Body of pancreas (tissue), 4 donors: ENCODE measurements at regions of chr5 and their contacts with region 1.

Region 1: GRCh38 chr5:93596676-93597461 is 13.8 kb downstream of the NR2F1 start:
- DNase-seq: no peak
- ATAC-seq: no peak
- H3K4me3 ChIP-seq: no peak overlapping the region
- H3K27ac ChIP-seq: no peak overlapping the region
- H3K4me1 ChIP-seq: peaks cover 5% of the 10 kb centered on the region
- H3K27me3 ChIP-seq: peaks cover 0 to 21% of the 10 kb centered on the region in 2 donors
- CTCF ChIP-seq: no peak
- POLR2A ChIP-seq: no peak

Region 2: DNA sequence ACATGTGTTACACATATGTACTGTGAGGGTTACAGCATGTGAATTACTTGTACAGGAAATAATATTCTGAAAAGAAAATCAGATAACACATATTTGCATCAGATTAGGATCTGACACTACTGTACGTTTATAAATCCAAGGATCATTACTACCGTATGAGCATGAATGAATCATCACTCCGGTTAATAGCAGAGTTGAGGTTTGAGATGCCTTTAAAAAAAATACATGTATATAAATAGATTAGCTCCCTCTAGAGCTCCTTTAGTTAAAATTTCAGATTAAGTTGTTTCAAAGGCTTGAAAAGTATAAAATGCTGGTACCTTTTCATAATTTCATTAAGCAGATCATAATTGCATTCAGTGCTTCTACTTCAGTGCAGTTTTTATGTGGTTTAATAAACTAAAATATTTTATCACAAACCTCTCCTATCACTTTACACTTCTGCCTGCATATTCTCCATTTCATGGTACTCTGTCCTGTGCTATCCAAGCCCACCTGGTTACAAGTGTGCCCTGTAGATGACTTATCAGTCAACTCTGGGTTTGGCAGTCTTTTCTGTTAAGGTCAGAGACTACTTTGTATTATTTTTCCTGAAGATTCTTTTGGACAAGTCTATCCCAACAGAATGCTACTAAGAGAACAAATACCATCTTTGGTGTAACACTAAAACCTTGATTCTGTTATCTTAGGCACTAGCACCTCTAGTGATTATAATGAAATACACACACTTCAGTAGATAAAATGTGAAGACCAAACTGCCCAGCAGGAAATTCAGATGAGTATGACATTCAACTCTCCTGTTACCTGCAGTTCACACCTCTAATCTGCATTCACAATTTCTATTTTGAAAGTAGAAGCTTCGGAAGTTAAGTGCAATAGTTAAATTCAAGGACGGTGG is 192.6 kb after region 1 on chr5:
- intact Hi-C with region 1: loop called (anchors 10 kb)
- DNase-seq: no peak
- ATAC-seq: no peak
- H3K4me3 ChIP-seq: no peak overlapping the region
- H3K27ac ChIP-seq: no peak overlapping the region
- H3K4me1 ChIP-seq: no peaks in the 10 kb centered on the region
- H3K27me3 ChIP-seq: no peaks in the 10 kb centered on the region
- CTCF ChIP-seq: no peak
- POLR2A ChIP-seq: no peak